B cell (primary cell): ENCODE measurements at regions of chr10 and their contacts with region 1.

Region 1: GRCh38 chr10:11113156-11113555 is 95.5 kb downstream of the CELF2 start:
- DNase-seq: peak; percentile 71
- ATAC-seq: peak; percentile 70
- H3K4me3 ChIP-seq: no peak overlapping the region
- H3K4me3 Mint-ChIP-seq: peak overlapping the region; percentile 17
- H3K27ac ChIP-seq: no peak overlapping the region
- H3K27ac Mint-ChIP-seq: no peak overlapping the region
- H3K4me1 ChIP-seq: peaks cover 7 to 9% of the 10 kb centered on the region in 2 donors
- H3K4me1 Mint-ChIP-seq: peaks cover 7% of the 10 kb centered on the region
- H3K27me3 ChIP-seq: no peaks in the 10 kb centered on the region
- H3K27me3 Mint-ChIP-seq: no peaks in the 10 kb centered on the region
- CTCF ChIP-seq: peak; percentile 67

Region 2: GRCh38 chr10:11017570-11018431 is 95.4 kb before region 1 on chr10 and contains the start of gene CELF2:
- CTCF ChIA-PET with region 1: no interaction called
- POLR2A ChIA-PET with region 1: no interaction called
- intact Hi-C with region 1: no loop called
- DNase-seq: peak; percentile 67
- ATAC-seq: peak; percentile 79
- H3K4me3 ChIP-seq: peak within 1 kb of the TSS; percentile 18 to 58 (median 49)
- H3K4me3 Mint-ChIP-seq: peak within 1 kb of the TSS; percentile 85
- H3K27ac ChIP-seq: no peak within 1 kb of the TSS
- H3K27ac Mint-ChIP-seq: no peak within 1 kb of the TSS
- H3K4me1 ChIP-seq: peaks cover 8 to 16% of the 10 kb centered on the region in 2 donors
- H3K4me1 Mint-ChIP-seq: peaks cover 18% of the 10 kb centered on the region
- H3K27me3 ChIP-seq: peaks cover 0 to 66% (median 40%) of the 10 kb centered on the region in 4 experiments
- H3K27me3 Mint-ChIP-seq: peaks cover 74% of the 10 kb centered on the region
- CTCF ChIP-seq: no peak
- total RNA-seq, gene CELF2: 112 and 114 TPM in 2 replicates

Region 3: DNA sequence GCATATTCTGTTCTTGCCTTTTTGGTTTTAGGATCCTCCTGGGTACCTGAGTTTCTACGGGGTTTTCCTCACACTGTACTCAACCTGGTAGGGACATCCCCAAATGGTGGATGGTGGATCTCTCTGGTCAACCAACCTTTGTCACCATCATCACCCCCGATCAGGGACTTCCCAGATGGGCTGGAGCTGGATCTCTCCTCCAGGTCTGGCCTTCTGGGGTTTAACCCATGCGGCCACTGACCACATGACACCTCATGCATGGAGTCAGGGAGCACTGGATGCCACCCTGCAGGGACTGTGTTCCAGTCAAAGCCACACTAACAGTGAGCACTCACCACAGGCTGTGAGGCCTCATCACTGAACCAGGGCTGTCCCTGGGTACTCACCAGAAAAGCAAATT is 15.5 kb before region 1 on chr10:
- CTCF ChIA-PET with region 1: interaction called, 11 read pairs
- POLR2A ChIA-PET with region 1: no interaction called
- intact Hi-C with region 1: no loop called
- DNase-seq: no peak
- ATAC-seq: no peak
- H3K4me3 ChIP-seq: no peak overlapping the region
- H3K4me3 Mint-ChIP-seq: no peak overlapping the region
- H3K27ac ChIP-seq: no peak overlapping the region
- H3K27ac Mint-ChIP-seq: no peak overlapping the region
- H3K4me1 ChIP-seq: peaks cover 0 to 5% of the 10 kb centered on the region in 2 donors
- H3K4me1 Mint-ChIP-seq: peaks cover 9% of the 10 kb centered on the region
- H3K27me3 ChIP-seq: peaks cover 0 to 3% (median 0%) of the 10 kb centered on the region in 4 experiments
- H3K27me3 Mint-ChIP-seq: peaks cover 23% of the 10 kb centered on the region
- CTCF ChIP-seq: no peak

Region 4: GRCh38 chr10:11145495-11145855 is 32.3 kb after region 1 on chr10:
- CTCF ChIA-PET with region 1: interaction called, 3 read pairs
- POLR2A ChIA-PET with region 1: no interaction called
- intact Hi-C with region 1: loop called (anchors 1 kb)
- DNase-seq: peak; percentile 70
- ATAC-seq: peak; percentile 75
- H3K4me3 ChIP-seq: peak overlapping the region in 4 of 5 experiments; percentile 7 to 33 (median 22)
- H3K4me3 Mint-ChIP-seq: peak overlapping the region; percentile 68
- H3K27ac ChIP-seq: peak overlapping the region; percentile 33 to 76
- H3K27ac Mint-ChIP-seq: peak overlapping the region; percentile 85
- H3K4me1 ChIP-seq: peaks cover 84 to 89% of the 10 kb centered on the region in 2 donors
- H3K4me1 Mint-ChIP-seq: peaks cover 90% of the 10 kb centered on the region
- H3K27me3 ChIP-seq: no peaks in the 10 kb centered on the region
- H3K27me3 Mint-ChIP-seq: no peaks in the 10 kb centered on the region
- CTCF ChIP-seq: no peak

Region 5: DNA sequence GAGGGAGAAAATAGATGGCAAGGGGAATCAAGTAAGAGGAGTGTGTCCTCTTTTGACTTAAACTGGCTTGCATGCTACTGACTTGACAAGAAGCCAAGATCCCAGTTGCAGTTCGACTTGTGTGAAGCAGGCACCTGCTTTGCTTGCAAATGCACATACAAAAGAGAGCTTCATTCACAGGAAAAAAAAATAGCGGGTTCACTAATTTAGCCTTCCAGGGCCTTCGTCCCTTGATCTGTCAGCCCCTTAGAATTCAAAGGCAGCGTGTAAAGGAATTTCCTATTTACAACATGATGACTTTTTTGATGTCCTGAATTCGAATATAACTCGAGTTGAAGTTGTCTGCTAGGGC is 96.7 kb after region 1 on chr10:
- CTCF ChIA-PET with region 1: interaction called, 12 read pairs
- POLR2A ChIA-PET with region 1: no interaction called
- intact Hi-C with region 1: no loop called
- DNase-seq: no peak
- ATAC-seq: peak; percentile 22
- H3K4me3 ChIP-seq: peak overlapping the region in 4 of 5 experiments; percentile 0 to 43 (median 6)
- H3K4me3 Mint-ChIP-seq: peak overlapping the region; percentile 66
- H3K27ac ChIP-seq: peak overlapping the region; percentile 28 to 80
- H3K27ac Mint-ChIP-seq: peak overlapping the region; percentile 51
- H3K4me1 ChIP-seq: peaks cover 68% of the 10 kb centered on the region in 2 donors
- H3K4me1 Mint-ChIP-seq: peaks cover 83% of the 10 kb centered on the region
- H3K27me3 ChIP-seq: no peaks in the 10 kb centered on the region
- H3K27me3 Mint-ChIP-seq: no peaks in the 10 kb centered on the region
- CTCF ChIP-seq: no peak

Region 6: DNA sequence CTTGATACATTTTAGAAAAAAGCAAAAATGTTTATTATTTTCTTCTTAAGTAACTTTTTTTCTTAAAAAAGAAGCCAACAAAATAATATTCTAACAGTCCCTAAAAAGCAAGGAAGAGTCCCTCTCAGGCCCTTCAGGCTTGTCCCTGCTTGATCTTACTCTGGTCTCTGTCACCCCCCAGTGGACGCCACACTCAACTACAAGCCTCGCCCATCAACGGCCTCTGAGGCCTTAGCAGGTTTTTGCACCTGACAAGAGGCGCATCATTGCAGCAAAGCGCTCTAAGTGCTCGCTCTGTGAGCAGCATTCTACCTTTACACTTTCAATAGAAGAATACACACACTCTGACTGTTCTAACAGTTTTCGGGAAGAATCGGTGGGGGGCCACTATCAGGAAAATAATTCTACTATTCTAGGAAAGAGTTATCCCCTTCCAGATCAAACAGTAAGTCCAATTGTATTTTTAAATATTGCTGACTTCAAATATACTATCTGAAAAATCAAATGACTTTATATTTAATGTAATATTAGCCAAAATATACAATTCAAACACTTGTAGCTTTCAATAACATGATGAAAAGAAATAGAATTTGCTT is 359.1 kb after region 1 on chr10:
- CTCF ChIA-PET with region 1: no interaction called
- POLR2A ChIA-PET with region 1: no interaction called
- intact Hi-C with region 1: loop called (anchors 5 kb)
- DNase-seq: peak; percentile 73
- ATAC-seq: peak; percentile 81
- H3K4me3 ChIP-seq: no peak overlapping the region
- H3K4me3 Mint-ChIP-seq: no peak overlapping the region
- H3K27ac ChIP-seq: no peak overlapping the region
- H3K27ac Mint-ChIP-seq: peak overlapping the region; percentile 61
- H3K4me1 ChIP-seq: peaks cover 4 to 5% of the 10 kb centered on the region in 2 donors
- H3K4me1 Mint-ChIP-seq: peaks cover 12% of the 10 kb centered on the region
- H3K27me3 ChIP-seq: no peaks in the 10 kb centered on the region
- H3K27me3 Mint-ChIP-seq: no peaks in the 10 kb centered on the region
- CTCF ChIP-seq: peak; percentile 93